Activated T-helper 2 cell treated with anti-CD3 and anti-CD28 coated beads, Interferon-gamma antibody, Interleukin-2, Interleukin-4, amounts not matched to agents 10 μg/mL and 5 μg/mL and 100 μg/mL, durations not matched to agents 14 hours and 24 hours and 36 hours (primary cell): ENCODE measurements at regions of chr3 and their contacts with region 1.

Region 1: DNA sequence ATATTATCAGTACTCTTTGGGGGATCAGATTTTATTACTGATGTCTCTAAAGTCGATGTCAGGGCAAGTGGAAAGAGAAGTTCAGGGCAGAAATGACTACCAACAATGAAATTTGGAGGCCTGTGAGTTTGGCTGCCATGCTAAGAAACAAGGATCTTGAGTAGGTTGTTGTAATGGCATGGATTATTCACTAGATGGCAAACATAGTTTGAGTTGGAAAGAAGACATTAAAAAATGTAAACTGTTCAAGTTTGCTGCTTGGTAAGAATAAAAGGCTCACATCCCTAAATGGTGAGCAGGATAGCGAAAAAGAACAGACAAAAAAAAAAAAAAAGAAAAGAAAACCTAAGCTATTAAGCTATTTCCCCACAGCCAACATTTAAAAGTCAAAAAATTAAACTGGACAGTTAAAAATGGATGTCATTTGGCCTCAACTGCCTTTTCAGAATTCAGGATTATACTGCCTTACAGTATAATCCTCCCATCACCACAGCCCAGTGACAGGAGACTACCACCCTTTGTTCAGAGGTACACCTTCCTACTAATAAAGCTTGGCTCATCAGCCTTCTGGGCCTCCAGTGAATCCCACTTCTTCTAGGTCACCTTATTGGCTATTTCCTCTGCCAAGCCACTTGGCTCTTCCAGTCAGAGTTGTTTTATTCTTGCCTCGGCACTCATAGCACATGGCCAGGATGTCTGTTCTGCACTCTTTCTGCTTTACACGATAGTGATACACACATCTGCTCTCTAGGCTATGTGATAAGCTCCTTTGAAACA is 163.7 kb downstream of the PLD1 start:
- DNase-seq: no peak
- H3K4me3 Mint-ChIP-seq: no peak overlapping the region
- H3K27ac Mint-ChIP-seq: no peak overlapping the region
- H3K4me1 Mint-ChIP-seq: no peaks in the 10 kb centered on the region
- H3K27me3 Mint-ChIP-seq: peaks cover 3% of the 10 kb centered on the region

Region 2: DNA sequence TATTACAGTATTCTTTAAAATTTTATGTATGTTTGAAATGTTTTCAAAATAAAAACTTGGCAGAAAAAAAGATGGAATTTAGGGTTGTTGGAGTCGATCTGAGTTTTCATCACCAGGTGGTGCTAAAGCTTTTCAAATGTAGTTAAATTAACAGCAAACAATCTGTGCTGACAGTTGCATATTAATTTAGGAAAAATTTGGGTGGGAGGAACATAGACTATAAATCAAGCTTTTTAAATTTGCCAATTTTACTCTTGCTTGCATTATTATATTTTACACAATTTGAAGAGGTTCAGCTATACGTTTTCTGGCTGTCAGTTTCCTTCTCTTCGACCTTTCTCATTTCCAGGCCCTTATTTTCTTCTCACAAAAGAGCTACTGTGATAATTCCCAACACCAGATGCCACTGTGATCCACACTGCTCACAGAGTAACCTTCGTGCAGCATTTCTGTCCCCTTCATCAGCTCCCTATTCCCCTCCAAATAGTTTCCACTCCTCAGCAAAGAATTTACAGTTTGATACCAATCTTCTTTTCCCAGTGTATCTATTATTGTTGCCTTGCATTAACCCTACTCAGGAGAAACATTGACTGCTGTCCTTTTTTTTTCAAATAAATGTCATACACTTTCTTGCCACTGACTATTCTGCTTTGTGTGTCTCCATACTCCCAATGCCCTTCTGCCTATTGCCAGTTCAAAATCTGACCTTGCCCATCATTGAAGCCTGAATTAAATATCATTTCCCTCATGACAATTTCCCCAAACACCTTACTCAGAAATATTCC is 684.7 kb before region 1 on chr3:
- intact Hi-C with region 1: loop called (anchors 5 kb)
- DNase-seq: no peak
- H3K4me3 Mint-ChIP-seq: no peak overlapping the region
- H3K27ac Mint-ChIP-seq: no peak overlapping the region
- H3K4me1 Mint-ChIP-seq: no peaks in the 10 kb centered on the region
- H3K27me3 Mint-ChIP-seq: peaks cover 24% of the 10 kb centered on the region

Region 3: DNA sequence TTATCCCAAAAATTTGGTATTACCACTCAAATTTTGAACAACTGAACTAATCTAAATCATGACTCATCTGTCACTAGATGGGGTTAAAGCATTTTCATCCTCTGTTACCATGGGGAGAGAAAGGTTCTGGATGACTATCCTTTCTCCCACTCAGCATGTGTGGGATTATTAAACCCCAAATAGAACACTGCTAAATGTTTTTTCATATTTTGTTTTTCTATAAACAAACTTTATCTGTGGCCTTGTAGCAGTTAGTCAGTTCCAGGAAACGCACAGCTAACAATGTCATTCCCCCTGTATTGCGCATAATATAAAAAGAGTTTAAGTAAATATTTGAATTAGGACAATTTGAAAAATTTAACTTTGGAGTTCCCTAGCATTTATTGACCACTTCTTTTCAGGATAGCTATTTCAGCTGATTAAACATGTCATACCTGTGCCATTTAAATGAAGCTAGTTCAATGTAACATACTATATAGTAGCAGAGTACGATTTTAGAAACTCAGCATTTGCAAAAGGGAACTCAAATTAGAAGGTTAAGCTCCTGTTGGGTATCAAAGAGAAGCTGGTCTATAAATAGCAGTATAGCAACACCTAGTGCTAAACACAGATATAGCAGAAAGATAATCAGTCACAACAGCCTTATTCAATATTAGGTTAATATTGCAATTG is 187.4 kb after region 1 on chr3:
- intact Hi-C with region 1: loop called (anchors 2 kb)
- DNase-seq: no peak
- H3K4me3 Mint-ChIP-seq: no peak overlapping the region
- H3K27ac Mint-ChIP-seq: no peak overlapping the region
- H3K4me1 Mint-ChIP-seq: no peaks in the 10 kb centered on the region
- H3K27me3 Mint-ChIP-seq: peaks cover 38% of the 10 kb centered on the region